Motor neuron (in vitro differentiated cells): ENCODE measurements at regions of chr5 and their contacts with region 1.

Region 1: GRCh38 chr5:50962934-50963872 is 296.8 kb downstream of the PARP8 start:
- ATAC-seq: peak; percentile 87 to 94 (median 90)
- H3K4me3 ChIP-seq: peak overlapping the region; percentile 24 to 38 (median 32)
- H3K27ac ChIP-seq: peak overlapping the region in 1 of 2 donors; percentile 20
- H3K4me1 ChIP-seq: peaks cover 6 to 12% of the 10 kb centered on the region in 2 donors

Region 2: DNA sequence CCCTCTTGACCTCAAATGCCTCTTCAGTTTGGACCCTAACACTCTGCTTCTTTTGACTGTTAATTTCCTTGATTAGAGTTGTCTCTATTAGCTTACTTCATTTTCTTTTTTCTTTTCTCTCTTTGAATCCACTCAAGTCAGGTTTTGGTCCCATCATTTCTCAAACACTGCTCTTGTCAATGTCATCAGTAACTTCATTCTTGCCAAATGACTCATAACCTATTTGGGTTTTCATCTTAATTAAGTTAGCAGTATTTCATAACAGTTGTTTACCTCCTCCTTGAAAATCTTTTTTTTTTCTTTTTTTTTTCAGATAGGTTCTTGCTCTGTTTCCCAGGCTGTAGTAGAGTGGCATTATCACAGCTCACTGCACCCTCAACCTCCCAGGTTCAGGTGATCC is 177.1 kb before region 1 on chr5:
- in situ Hi-C with region 1: no loop called
- ATAC-seq: no peak
- H3K4me3 ChIP-seq: no peak overlapping the region
- H3K27ac ChIP-seq: no peak overlapping the region
- H3K4me1 ChIP-seq: no peaks in the 10 kb centered on the region

Region 3: DNA sequence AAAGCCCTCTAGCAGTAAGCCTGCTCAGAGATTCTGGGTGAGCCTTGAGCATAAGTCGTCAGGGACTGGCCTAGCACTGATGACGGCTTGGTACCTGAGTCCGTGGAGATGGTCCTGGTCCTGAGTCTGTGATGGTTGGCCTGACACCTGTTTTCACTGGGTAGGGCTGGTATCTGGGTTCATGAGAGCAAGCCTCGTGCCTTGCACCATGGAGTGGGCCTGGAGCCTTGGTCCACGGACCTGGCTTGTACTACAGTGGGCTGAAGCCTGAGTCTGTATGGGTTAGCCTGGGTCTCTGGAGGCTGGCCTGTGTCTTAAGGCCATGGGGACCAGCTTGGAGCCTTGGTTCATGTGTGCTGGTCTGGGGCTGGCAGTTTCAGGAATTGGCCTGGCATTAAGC is 109.7 kb after region 1 on chr5:
- in situ Hi-C with region 1: no loop called
- ATAC-seq: no peak
- H3K4me3 ChIP-seq: no peak overlapping the region
- H3K27ac ChIP-seq: no peak overlapping the region
- H3K4me1 ChIP-seq: no peaks in the 10 kb centered on the region

Region 4: DNA sequence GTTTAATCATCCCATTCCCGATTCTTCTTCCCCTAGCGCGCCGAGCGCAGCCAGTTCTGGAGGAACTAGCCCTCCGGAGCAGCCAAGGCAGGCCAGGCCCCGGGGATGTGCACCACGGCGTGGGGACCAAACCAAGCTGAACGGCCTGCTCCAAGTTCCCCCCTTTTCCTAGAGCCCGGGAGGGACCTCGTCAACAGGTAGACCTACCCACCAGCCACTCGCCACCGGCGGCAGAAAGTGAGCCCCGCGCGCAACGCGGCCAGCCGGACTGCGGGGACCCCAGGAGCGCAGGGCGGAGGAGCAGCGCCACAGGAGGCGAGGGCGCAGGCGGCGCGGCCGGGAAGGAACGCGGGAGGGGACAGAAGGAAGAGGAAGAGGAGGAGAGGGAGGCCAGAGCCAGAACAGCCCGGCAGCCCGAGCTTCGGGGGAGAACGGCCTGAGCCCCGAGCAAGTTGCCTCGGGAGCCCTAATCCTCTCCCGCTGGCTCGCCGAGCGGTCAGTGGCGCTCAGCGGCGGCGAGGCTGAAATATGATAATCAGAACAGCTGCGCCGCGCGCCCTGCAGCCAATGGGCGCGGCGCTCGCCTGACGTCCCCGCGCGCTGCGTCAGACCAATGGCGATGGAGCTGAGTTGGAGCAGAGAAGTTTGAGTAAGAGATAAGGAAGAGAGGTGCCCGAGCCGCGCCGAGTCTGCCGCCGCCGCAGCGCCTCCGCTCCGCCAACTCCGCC is 419.7 kb after region 1 on chr5 and contains the start of gene ISL1:
- in situ Hi-C with region 1: loop called in 6 of 9 experiments (anchors 10 to 25 kb)
- ATAC-seq: peak; percentile 85 to 94 (median 92)
- H3K4me3 ChIP-seq: peak within 1 kb of the TSS; percentile 36 to 55 (median 44)
- H3K27ac ChIP-seq: peak within 1 kb of the TSS in 1 of 2 donors; percentile 22
- H3K4me1 ChIP-seq: peaks cover 5 to 13% of the 10 kb centered on the region in 2 donors
- total RNA-seq, gene ISL1: 0.49 to 41.6 (median 10.3) TPM in 7 of 8 experiments, not detected in the other

Region 5: GRCh38 chr5:51521583-51521982 is 558.4 kb after region 1 on chr5:
- in situ Hi-C with region 1: no loop called
- ATAC-seq: no peak
- H3K4me3 ChIP-seq: no peak overlapping the region
- H3K27ac ChIP-seq: no peak overlapping the region
- H3K4me1 ChIP-seq: no peaks in the 10 kb centered on the region

Region 6: DNA sequence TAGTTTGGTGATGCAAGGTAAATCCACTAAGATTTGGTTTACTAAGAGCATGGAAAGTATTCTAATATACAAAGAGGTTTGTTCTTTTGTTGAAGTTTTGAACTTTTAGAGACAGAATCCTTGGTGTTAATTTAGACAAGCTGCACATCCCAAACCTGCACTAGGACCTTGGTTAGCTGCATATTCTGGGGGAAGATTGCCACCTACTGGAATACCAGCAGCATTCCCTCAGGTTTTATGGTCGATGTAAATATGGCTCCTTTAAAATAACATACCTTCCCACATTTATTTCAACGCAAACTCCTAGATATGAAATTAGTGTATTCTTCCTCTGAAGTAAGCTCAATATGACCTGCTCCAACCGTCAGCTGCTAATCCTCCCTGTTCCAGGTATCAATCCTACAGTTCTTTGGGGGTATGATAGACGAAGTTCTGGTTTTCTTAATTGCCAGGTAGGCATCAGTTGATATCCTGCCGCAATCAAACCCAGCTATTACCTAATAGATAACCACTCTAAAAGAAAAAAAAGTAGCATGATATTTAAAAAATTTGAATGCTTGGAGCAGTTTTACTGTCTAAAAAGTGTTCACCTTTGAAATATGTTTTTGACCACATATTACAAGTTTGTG is 1044.1 kb after region 1 on chr5:
- in situ Hi-C with region 1: loop called in 5 of 9 experiments (anchors 10 to 25 kb)
- ATAC-seq: peak; percentile 62 to 91 (median 68)
- H3K4me3 ChIP-seq: no peak overlapping the region
- H3K27ac ChIP-seq: no peak overlapping the region
- H3K4me1 ChIP-seq: peaks cover 0 to 11% of the 10 kb centered on the region in 2 donors

Region 7: DNA sequence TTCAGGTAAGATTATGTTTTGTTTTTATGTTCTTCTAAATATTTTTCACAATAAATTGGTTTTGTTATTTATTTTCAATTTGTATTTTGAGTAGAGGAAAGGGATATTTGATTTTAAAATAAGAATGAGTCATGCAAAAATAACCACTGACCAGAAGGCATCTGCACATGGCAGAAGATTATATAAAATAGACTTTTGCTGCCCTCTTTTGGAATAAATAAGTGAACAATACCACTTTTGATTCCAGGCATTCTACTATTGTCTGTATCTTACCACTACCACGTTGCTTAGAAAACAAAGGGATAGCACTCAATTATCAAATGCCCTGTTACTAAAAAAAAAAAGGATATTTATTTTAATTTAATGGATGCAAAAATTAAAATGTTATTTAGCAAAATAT is 1597.2 kb after region 1 on chr5:
- in situ Hi-C with region 1: loop called in 2 of 9 experiments (anchors 25 kb)
- ATAC-seq: peak in 7 of 8 experiments; percentile 35 to 91 (median 61)
- H3K4me3 ChIP-seq: no peak overlapping the region
- H3K27ac ChIP-seq: no peak overlapping the region
- H3K4me1 ChIP-seq: no peaks in the 10 kb centered on the region